Right ventricle myocardium inferior (tissue), 1 donor: ENCODE measurements at regions of chr18 and their contacts with region 1.

Region 1: GRCh38 chr18:44696892-44697291 is 16.2 kb downstream of the SETBP1 start:
- DNase-seq: no peak
- ATAC-seq: peak; percentile 59

Region 2: GRCh38 chr18:44882163-44882868 is 185.4 kb after region 1 on chr18:
- intact Hi-C with region 1: loop called (anchors 5 kb)
- DNase-seq: no peak
- ATAC-seq: peak; percentile 94